Activated CD8-positive, alpha-beta T cell treated with anti-CD3 and anti-CD28 coated beads for 36 hours (primary cell): ENCODE measurements at regions of chr11 and their contacts with region 1.

Region 1: DNA sequence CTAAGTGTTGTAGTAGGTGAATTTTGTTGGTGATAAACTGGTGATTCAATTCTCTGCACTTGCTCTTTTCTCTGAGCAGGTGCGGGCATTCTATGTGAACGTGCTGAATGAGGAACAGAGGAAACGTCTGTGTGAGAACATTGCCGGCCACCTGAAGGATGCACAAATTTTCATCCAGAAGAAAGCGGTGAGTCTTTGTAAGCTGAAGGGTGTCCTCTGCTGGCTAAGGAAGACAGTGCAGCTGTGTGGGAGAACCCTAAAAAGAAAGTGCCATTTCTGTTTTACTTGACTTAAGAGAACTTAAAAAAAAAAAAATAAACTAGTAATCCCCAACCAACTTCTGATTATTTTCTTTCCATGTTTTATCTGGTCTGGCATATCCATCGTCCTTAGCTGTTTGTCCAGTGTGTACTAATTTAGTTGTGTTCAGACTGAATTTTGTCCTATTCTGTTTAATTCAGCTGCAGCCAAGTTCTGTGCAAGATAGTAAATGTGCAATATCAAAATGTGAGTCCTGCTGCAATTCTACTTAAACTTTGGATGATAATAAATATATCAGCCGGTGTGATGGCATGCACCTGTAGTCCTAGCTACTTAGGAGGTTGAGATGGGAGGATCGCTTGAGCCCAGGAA is 29.6 kb downstream of the CAT start:
- DNase-seq: peak; percentile 76
- ATAC-seq: peak; percentile 84
- H3K4me3 Mint-ChIP-seq: no peak overlapping the region
- H3K27ac Mint-ChIP-seq: no peak overlapping the region
- H3K4me1 Mint-ChIP-seq: peaks cover 4% of the 10 kb centered on the region
- H3K27me3 Mint-ChIP-seq: no peaks in the 10 kb centered on the region
- CTCF ChIP-seq: peak; percentile 85

Region 2: DNA sequence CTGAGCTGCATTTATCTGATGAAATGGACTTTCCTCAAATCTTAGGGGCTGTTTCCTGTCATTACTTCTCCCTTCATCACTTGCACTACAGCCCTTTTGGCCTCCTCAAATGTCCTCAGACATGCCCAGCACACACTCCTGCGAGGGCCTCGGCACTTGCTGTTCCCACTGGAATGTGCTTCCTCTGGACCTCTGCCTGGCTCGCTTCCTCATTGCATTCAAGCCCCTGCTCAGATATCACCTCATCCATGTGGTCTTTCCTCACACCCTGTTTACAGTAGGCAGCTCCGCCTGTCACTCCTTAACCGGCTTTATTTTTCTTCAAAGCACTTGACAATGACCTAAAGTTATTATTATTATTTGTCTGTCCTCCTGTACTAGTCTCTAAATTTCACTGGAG is 353.9 kb before region 1 on chr11:
- CTCF ChIA-PET with region 1: no interaction called
- POLR2A ChIA-PET with region 1: no interaction called
- intact Hi-C with region 1: no loop called
- DNase-seq: no peak
- ATAC-seq: no peak
- H3K4me3 Mint-ChIP-seq: no peak overlapping the region
- H3K27ac Mint-ChIP-seq: no peak overlapping the region
- H3K4me1 Mint-ChIP-seq: peaks cover 3% of the 10 kb centered on the region
- H3K27me3 Mint-ChIP-seq: no peaks in the 10 kb centered on the region
- CTCF ChIP-seq: no peak

Region 3: DNA sequence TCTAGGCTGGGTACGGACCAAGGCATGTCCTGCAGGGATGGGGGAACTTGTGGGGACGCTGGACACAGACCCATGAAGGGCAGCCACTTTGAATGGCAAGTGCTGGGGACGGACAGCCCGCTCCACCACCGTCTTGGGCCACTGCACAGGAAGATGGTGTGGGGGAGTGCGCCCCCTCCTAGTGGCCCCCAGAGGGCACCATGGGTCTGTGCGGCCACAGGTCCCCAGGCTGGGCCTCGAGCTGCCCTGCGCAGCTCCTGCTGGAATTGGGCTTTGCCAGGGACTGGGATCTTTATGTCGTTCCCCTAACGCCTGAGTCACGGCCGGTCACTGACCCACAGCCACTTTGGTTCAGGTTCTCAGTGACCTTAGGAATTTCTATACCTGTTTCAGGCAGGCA is 318.5 kb before region 1 on chr11:
- CTCF ChIA-PET with region 1: interaction called, 3 read pairs
- POLR2A ChIA-PET with region 1: no interaction called
- intact Hi-C with region 1: loop called (anchors 10 kb)
- DNase-seq: no peak
- ATAC-seq: no peak
- H3K4me3 Mint-ChIP-seq: no peak overlapping the region
- H3K27ac Mint-ChIP-seq: no peak overlapping the region
- H3K4me1 Mint-ChIP-seq: no peaks in the 10 kb centered on the region
- H3K27me3 Mint-ChIP-seq: no peaks in the 10 kb centered on the region
- CTCF ChIP-seq: no peak

Region 4: GRCh38 chr11:34192481-34193401 is 275.6 kb before region 1 on chr11:
- CTCF ChIA-PET with region 1: no interaction called
- POLR2A ChIA-PET with region 1: no interaction called
- intact Hi-C with region 1: no loop called
- DNase-seq: peak; percentile 32
- ATAC-seq: peak; percentile 87
- H3K4me3 Mint-ChIP-seq: no peak overlapping the region
- H3K27ac Mint-ChIP-seq: no peak overlapping the region
- H3K4me1 Mint-ChIP-seq: peaks cover 7% of the 10 kb centered on the region
- H3K27me3 Mint-ChIP-seq: no peaks in the 10 kb centered on the region
- CTCF ChIP-seq: no peak

Region 5: GRCh38 chr11:34366522-34366921 is 101.8 kb before region 1 on chr11:
- CTCF ChIA-PET with region 1: interaction called, 22 read pairs
- POLR2A ChIA-PET with region 1: no interaction called
- intact Hi-C with region 1: loop called (anchors 10 kb)
- DNase-seq: peak; percentile 45
- ATAC-seq: no peak
- H3K4me3 Mint-ChIP-seq: no peak overlapping the region
- H3K27ac Mint-ChIP-seq: no peak overlapping the region
- H3K4me1 Mint-ChIP-seq: peaks cover 18% of the 10 kb centered on the region
- H3K27me3 Mint-ChIP-seq: peaks cover 26% of the 10 kb centered on the region
- CTCF ChIP-seq: no peak

Region 6: GRCh38 chr11:34438529-34439507 is 29.5 kb before region 1 on chr11 and contains the start of gene CAT:
- CTCF ChIA-PET with region 1: interaction called, 10 read pairs
- POLR2A ChIA-PET with region 1: no interaction called
- intact Hi-C with region 1: no loop called
- DNase-seq: peak; percentile 99
- ATAC-seq: peak; percentile 97
- H3K4me3 Mint-ChIP-seq: peak within 1 kb of the TSS; percentile 87
- H3K27ac Mint-ChIP-seq: peak within 1 kb of the TSS; percentile 92
- H3K4me1 Mint-ChIP-seq: peaks cover 17% of the 10 kb centered on the region
- H3K27me3 Mint-ChIP-seq: no peaks in the 10 kb centered on the region
- CTCF ChIP-seq: no peak
- total RNA-seq, gene CAT: 23.9 to 24.8 TPM

Region 7: GRCh38 chr11:34449013-34449412 is 19.3 kb before region 1 on chr11:
- CTCF ChIA-PET with region 1: interaction called, 20 read pairs
- POLR2A ChIA-PET with region 1: interaction called, 3 read pairs
- intact Hi-C with region 1: no loop called
- DNase-seq: peak; percentile 48
- ATAC-seq: peak; percentile 39
- H3K4me3 Mint-ChIP-seq: no peak overlapping the region
- H3K27ac Mint-ChIP-seq: peak overlapping the region; percentile 40
- H3K4me1 Mint-ChIP-seq: peaks cover 32% of the 10 kb centered on the region
- H3K27me3 Mint-ChIP-seq: no peaks in the 10 kb centered on the region
- CTCF ChIP-seq: no peak

Region 8: DNA sequence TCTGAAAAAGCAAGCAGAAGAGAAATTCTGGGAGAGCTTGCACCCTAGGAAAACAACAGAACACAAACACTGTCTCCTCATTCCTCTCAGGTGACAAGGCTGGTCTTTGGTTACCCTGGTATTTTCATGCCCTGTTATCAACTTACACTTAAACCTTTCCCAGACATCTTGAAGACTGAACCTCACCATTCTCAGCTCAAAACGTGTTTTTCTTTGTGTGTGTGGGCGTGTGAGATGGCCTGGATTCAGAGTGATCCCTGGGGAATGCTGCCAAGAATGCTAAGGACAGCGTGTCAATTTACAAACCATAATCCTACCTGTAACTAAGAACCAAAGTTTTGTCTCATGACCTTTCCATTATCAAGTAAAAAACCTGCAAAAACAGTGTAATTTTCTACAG is 12.0 kb after region 1 on chr11:
- CTCF ChIA-PET with region 1: interaction called, 18 read pairs
- POLR2A ChIA-PET with region 1: no interaction called
- intact Hi-C with region 1: no loop called
- DNase-seq: no peak
- ATAC-seq: no peak
- H3K4me3 Mint-ChIP-seq: no peak overlapping the region
- H3K27ac Mint-ChIP-seq: no peak overlapping the region
- H3K4me1 Mint-ChIP-seq: no peaks in the 10 kb centered on the region
- H3K27me3 Mint-ChIP-seq: peaks cover 2% of the 10 kb centered on the region
- CTCF ChIP-seq: no peak

Region 9: DNA sequence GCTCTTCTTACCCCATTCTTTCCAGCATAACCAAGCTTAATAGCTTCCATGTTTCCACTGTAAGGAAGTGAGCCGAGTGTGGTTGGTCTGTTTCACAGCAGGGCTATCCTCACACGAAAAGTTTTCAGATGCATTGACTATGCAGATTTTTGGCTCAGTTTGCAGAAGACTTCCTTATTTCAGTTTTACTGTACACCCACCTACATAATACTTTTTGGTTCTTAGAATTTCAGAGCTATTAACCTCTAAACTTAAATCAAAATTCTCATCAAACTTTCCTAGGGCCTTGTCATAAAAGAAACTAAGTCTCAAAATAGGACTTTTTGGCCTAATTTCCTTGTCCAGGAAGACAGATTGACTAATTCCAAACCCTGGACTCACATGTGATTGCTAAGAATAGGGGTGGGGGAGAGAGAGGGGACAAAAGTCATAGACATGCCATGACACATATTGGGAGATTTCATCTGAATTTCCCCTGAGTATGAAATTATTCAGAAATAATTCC is 145.3 kb after region 1 on chr11:
- CTCF ChIA-PET with region 1: no interaction called
- POLR2A ChIA-PET with region 1: no interaction called
- intact Hi-C with region 1: no loop called
- DNase-seq: no peak
- ATAC-seq: no peak
- H3K4me3 Mint-ChIP-seq: no peak overlapping the region
- H3K27ac Mint-ChIP-seq: no peak overlapping the region
- H3K4me1 Mint-ChIP-seq: peaks cover 17% of the 10 kb centered on the region
- H3K27me3 Mint-ChIP-seq: peaks cover 20% of the 10 kb centered on the region
- CTCF ChIP-seq: no peak

Region 10: DNA sequence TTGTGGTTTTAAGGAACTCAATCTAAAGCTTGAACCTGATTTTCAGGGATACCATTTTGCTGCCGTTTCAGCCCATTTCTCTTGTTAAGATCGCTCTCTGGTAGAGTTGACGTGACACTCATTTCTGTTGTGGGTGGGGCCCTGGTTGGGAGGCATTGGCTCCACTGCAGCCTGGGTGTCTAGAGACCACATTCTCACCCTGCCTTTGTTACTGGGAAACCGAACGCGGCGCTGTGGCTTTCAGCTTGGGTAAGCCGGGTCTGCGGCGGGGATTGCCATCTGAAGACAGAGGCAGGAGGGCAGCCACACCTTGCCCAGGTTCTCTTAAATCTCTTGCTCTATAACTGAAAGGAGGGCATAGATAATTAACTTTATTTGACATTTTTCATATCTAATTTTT is 155.7 kb after region 1 on chr11:
- CTCF ChIA-PET with region 1: no interaction called
- POLR2A ChIA-PET with region 1: no interaction called
- intact Hi-C with region 1: no loop called
- DNase-seq: peak; percentile 31
- ATAC-seq: no peak
- H3K4me3 Mint-ChIP-seq: no peak overlapping the region
- H3K27ac Mint-ChIP-seq: no peak overlapping the region
- H3K4me1 Mint-ChIP-seq: peaks cover 4% of the 10 kb centered on the region
- H3K27me3 Mint-ChIP-seq: peaks cover 41% of the 10 kb centered on the region
- CTCF ChIP-seq: no peak